BJ (cell line): ENCODE measurements at regions of chr7 and their contacts with region 1.

Region 1: DNA sequence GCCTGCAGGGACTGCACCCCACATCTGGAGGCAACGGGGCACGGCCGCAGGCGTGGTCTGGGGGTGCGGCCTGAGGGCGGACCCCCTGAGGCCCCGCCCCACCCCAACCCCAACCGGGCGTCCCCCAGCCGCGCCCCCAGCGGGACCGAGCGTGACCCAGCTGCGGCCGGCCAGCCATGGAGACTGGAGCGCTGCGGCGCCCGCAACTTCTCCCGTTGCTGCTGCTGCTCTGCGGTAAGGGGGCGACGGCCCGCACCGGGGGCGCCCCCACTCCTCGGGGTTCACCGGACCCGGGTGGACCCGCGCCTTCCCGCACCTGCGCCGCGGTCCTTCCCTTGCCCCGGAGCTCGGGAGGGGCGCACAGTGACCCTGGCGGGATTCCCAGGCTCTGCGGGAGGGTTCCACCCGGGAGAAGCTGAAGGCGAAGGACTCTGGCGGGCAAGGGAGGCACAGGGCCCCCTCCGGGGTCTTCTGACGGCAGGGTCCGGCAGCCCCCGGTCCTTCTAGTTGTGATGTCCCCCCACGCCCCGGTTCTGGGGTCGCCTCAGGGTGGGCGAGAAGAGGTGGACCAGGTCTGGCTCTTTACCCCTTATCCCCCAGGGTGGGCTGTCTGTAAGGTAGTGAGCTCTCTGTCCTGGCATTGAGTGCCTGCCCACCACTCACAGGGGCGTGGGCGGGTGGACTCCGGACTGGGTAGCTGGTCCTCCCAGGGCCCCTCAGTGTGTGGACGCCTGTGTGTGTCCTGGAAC is at the start of gene RAMP3:
- DNase-seq: no peak
- H3K4me3 ChIP-seq: no peak within 1 kb of the TSS
- H3K27me3 ChIP-seq: peaks cover 11% of the 10 kb centered on the region
- CTCF ChIP-seq: no peak
- polyA plus RNA-seq, gene RAMP3: not detected in 2 replicates

Region 2: DNA sequence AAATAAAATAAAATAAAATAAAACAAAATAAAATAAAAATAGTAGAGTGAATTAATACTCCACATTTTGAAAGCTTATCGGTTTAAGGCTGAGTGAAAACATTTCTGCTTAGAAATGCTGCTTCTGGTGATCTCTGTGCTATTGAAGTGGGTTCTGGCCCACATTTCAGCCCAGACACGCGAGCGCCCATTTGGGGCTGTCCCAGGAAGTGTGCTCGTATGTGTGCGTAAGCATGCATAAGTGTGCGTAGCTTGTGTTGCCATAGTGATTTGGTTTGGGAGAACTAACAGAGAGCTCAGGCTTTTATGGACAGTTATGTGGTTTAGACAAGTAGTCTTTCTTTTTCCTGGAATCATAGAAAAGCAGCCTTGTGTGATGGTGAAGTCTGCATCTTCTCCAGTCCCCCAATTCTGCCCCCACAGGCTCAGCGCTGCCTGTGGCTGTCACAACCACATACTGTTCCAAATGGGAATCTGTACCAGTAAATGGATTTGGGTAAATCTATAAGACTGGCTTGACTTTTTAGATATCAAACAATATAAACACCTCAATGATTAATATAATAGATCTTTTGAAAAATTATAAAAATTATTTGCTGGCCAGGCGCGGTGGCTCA is 242.7 kb before region 1 on chr7:
- CTCF ChIA-PET with region 1: no interaction called
- POLR2A ChIA-PET with region 1: no interaction called
- DNase-seq: no peak
- H3K4me3 ChIP-seq: no peak overlapping the region
- H3K27me3 ChIP-seq: no peaks in the 10 kb centered on the region
- CTCF ChIP-seq: no peak

Region 3: GRCh38 chr7:45259966-45260646 is 102.3 kb after region 1 on chr7:
- CTCF ChIA-PET with region 1: interaction called, 74 read pairs
- POLR2A ChIA-PET with region 1: no interaction called
- DNase-seq: no peak
- H3K4me3 ChIP-seq: no peak overlapping the region
- H3K27me3 ChIP-seq: peaks cover 5% of the 10 kb centered on the region
- CTCF ChIP-seq: peak; percentile 99

Region 4: DNA sequence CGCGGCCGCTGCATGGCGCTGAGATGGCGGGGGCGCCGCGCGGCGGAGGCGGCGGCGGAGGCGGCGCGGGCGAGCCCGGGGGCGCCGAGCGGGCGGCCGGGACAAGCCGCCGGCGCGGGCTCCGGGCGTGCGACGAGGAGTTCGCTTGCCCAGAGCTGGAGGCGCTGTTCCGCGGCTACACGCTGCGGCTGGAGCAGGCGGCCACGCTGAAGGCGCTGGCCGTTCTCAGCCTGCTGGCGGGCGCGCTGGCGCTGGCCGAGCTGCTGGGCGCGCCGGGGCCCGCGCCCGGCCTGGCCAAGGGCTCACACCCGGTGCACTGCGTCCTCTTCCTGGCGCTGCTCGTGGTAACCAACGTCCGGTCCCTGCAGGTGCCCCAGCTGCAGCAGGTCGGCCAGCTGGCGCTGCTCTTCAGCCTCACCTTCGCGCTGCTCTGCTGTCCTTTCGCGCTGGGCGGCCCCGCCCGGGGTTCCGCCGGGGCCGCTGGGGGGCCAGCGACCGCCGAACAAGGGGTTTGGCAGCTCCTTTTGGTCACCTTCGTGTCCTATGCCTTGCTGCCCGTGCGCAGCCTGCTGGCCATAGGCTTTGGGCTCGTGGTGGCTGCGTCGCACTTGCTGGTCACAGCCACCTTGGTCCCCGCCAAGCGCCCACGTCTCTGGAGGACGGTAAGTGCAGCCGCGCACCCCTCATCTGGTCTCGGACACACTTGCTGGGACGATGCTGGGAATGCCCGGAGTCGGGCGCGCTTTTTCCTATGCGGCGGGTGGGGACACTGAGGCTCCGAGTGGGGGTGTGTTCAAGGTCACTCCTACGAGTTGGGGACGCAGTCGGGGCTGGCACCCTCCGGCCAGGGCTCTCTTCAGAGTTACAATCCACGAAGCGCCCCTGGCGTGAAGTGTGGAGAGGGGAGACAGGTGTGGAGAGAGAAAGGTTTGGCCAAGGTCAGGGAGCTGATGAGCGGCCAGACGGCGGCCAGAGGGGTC is 417.0 kb after region 1 on chr7:
- CTCF ChIA-PET with region 1: no interaction called
- POLR2A ChIA-PET with region 1: no interaction called
- DNase-seq: no peak
- H3K4me3 ChIP-seq: peak overlapping the region; percentile 15
- H3K27me3 ChIP-seq: peaks cover 40% of the 10 kb centered on the region
- CTCF ChIP-seq: no peak